ENCODE measurements at regions of chr2 and their contacts with region 1.

Region 1: GRCh38 chr2:71100195-71100964 is 29.6 kb downstream of the MCEE start:
- DNase-seq: peak; percentile 74
- ATAC-seq: peak; percentile 79
- H3K4me3 ChIP-seq: no peak overlapping the region
- H3K27ac ChIP-seq: no peak overlapping the region
- H3K4me1 ChIP-seq: peaks cover 7% of the 10 kb centered on the region; the same call in 1 of the 2 replicates
- H3K27me3 ChIP-seq: no peaks in the 10 kb centered on the region
- CTCF ChIP-seq: peak; percentile 83

Region 2: GRCh38 chr2:71130113-71130904 is 29.9 kb after region 1 on chr2 and contains the starts of genes MCEE and MPHOSPH10:
- CTCF ChIA-PET with region 1: interaction called, 4 read pairs
- POLR2A ChIA-PET with region 1: no interaction called
- intact Hi-C with region 1: loop called (anchors 1 kb)
- DNase-seq: peak; percentile 94
- ATAC-seq: peak; percentile 93
- H3K4me3 ChIP-seq: peak within 1 kb of the TSS; percentile 93
- H3K27ac ChIP-seq: peak within 1 kb of the TSS; percentile 87
- H3K4me1 ChIP-seq: peaks cover 15% of the 10 kb centered on the region
- H3K27me3 ChIP-seq: no peaks in the 10 kb centered on the region
- CTCF ChIP-seq: no peak
- total RNA-seq, gene MCEE: 10.9 and 15.3 TPM in 2 replicates
- total RNA-seq, gene MPHOSPH10: 26.4 and 28.0 TPM in 2 replicates

Measured in PC-3 (cell line).